Calu3 (cell line): ENCODE measurements at regions of chr14 and their contacts with region 1.

Region 1: DNA sequence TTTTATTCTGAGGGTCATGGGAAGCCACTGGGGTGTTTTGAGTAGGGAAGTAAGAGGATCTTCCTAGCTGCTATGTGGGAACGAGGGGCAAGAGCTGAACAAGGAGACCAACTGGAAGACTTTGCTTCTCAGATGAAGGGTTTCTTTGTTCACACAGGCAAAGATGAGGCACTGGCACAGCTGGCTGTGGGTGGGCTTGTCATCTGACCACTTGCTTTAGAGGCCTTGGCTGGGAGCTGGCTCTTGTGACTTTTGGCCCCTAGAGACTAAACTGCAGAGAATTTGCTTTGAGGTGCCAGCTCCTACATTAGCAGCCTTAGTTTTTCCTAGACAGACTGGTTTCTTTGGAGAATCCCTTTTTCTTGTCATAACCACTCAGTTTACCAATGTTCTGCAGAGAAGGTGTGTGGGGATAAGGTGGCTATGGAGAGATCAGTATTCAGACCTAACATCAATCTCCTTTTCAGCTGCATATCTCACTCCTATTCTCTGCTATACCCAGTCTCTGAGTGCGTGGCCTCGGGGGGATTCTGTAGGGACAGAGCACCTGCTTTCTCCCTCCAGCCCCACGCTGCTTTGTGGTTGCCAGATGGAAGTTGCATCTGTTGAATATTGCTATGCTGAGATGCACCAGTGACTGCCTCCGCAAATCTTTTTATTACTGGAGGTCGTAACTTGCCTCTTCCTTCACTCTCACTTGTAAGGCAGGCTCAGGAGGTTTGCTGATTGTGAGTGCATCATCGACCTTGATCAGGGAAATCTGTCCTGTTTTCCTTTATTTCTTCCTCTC is 12.7 kb downstream of the PPP2R5C start:
- DNase-seq: no peak
- H3K4me3 Mint-ChIP-seq: no peak overlapping the region
- H3K27ac Mint-ChIP-seq: no peak overlapping the region
- H3K4me1 Mint-ChIP-seq: peaks cover 21% of the 10 kb centered on the region
- H3K27me3 Mint-ChIP-seq: peaks cover 6% of the 10 kb centered on the region
- CTCF ChIP-seq: no peak

Region 2: GRCh38 chr14:101559624-101560533 is 214.3 kb before region 1 on chr14:
- CTCF ChIA-PET with region 1: no interaction called
- intact Hi-C with region 1: no loop called
- DNase-seq: peak; percentile 77
- H3K4me3 Mint-ChIP-seq: peak overlapping the region; percentile 76
- H3K27ac Mint-ChIP-seq: no peak overlapping the region
- H3K4me1 Mint-ChIP-seq: peaks cover 9% of the 10 kb centered on the region
- H3K27me3 Mint-ChIP-seq: peaks cover 29% of the 10 kb centered on the region
- CTCF ChIP-seq: no peak

Region 3: DNA sequence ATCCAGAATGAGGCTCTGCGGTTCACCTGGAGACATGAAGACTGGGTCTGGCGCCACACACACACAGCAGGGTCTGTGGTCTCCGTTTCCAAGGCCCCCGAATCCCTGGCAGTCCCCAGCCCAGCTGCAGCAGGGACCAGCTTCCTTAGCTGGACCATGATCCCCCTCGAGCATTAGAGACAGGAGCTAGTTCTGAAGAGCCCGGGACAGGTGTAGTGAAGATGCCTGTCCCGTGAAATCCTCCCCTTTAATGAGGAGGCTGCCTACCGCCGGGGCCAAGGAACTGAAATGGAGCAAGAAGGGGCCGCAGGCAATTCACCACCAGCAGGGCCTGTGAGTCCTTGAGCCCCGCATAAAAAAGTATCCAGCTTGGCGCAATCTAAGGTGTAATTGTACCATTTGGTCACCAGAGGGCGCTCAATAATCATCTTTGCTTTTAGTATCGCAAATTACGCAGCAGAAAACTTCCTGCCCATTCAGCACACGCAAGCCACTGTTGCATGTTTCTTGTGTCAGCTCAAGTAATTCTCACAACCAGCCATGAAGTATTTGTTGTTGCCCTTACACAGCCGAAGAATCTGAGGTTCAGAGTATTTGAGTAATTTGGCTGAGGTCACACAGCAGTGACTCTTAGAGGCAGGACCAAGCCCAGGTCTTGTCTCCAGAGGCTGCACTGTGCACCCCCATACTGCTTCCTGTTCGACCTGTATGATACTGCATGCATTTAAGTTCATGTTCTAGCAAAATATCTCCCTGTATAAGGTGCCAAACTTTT is 66.9 kb before region 1 on chr14:
- CTCF ChIA-PET with region 1: interaction called, 15 read pairs
- intact Hi-C with region 1: loop called (anchors 1 kb)
- DNase-seq: peak; percentile 62
- H3K4me3 Mint-ChIP-seq: no peak overlapping the region
- H3K27ac Mint-ChIP-seq: no peak overlapping the region
- H3K4me1 Mint-ChIP-seq: peaks cover 19% of the 10 kb centered on the region
- H3K27me3 Mint-ChIP-seq: no peaks in the 10 kb centered on the region
- CTCF ChIP-seq: peak; percentile 77

Region 4: GRCh38 chr14:101809671-101810514 is 35.7 kb after region 1 on chr14:
- CTCF ChIA-PET with region 1: interaction called, 16 read pairs
- intact Hi-C with region 1: loop called (anchors 1 kb)
- DNase-seq: peak; percentile 87
- H3K4me3 Mint-ChIP-seq: peak overlapping the region; percentile 82
- H3K27ac Mint-ChIP-seq: peak overlapping the region; percentile 98
- H3K4me1 Mint-ChIP-seq: peaks cover 56% of the 10 kb centered on the region
- H3K27me3 Mint-ChIP-seq: no peaks in the 10 kb centered on the region
- CTCF ChIP-seq: no peak

Region 5: DNA sequence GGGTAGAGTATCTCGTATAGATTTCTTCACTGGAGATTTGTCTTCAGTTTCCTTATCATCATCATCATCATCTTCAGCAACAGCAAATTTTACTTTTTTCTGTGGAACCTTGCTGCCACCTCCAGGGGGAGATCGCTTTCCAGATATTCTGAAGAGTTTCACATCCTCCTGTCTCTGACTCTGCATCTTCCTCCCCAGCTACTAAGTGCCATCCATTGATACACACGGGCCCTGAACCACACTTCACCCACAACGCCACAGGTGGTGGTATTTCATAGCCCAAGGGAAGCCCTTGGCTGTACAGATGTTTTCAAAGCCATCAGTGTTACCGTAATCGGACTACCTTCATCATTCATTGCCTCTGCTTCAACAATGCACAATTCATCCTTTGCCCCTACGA is 69.5 kb after region 1 on chr14:
- CTCF ChIA-PET with region 1: interaction called, 3 read pairs
- intact Hi-C with region 1: loop called (anchors 5 kb)
- DNase-seq: peak; percentile 9
- H3K4me3 Mint-ChIP-seq: no peak overlapping the region
- H3K27ac Mint-ChIP-seq: no peak overlapping the region
- H3K4me1 Mint-ChIP-seq: no peaks in the 10 kb centered on the region
- H3K27me3 Mint-ChIP-seq: no peaks in the 10 kb centered on the region
- CTCF ChIP-seq: no peak

Region 6: GRCh38 chr14:101889898-101890297 is 115.7 kb after region 1 on chr14:
- CTCF ChIA-PET with region 1: interaction called, 4 read pairs
- intact Hi-C with region 1: loop called (anchors 10 kb)
- DNase-seq: no peak
- H3K4me3 Mint-ChIP-seq: no peak overlapping the region
- H3K27ac Mint-ChIP-seq: no peak overlapping the region
- H3K4me1 Mint-ChIP-seq: no peaks in the 10 kb centered on the region
- H3K27me3 Mint-ChIP-seq: no peaks in the 10 kb centered on the region
- CTCF ChIP-seq: no peak

Region 7: GRCh38 chr14:101927859-101928258 is 153.7 kb after region 1 on chr14:
- CTCF ChIA-PET with region 1: no interaction called
- intact Hi-C with region 1: loop called (anchors 10 kb)
- DNase-seq: no peak
- H3K4me3 Mint-ChIP-seq: no peak overlapping the region
- H3K27ac Mint-ChIP-seq: no peak overlapping the region
- H3K4me1 Mint-ChIP-seq: no peaks in the 10 kb centered on the region
- H3K27me3 Mint-ChIP-seq: no peaks in the 10 kb centered on the region
- CTCF ChIP-seq: no peak